GM12878 (cell line): ENCODE measurements at regions of chr5 and their contacts with region 1.

Region 1: GRCh38 chr5:111550279-111551020 is 38.1 kb upstream of the STARD4 start:
- DNase-seq: peak; percentile 50
- ATAC-seq: peak; percentile 99
- H3K4me3 ChIP-seq: no peak overlapping the region
- H3K27ac ChIP-seq: no peak overlapping the region
- H3K4me1 ChIP-seq: no peaks in the 10 kb centered on the region
- H3K27me3 ChIP-seq: no peaks in the 10 kb centered on the region
- CTCF ChIP-seq: peak; percentile 50 to 76 (median 56)
- EP300 ChIP-seq: no peak
- POLR2A ChIP-seq: no peak
- RAD21 ChIP-seq: peak; percentile 91

Region 2: DNA sequence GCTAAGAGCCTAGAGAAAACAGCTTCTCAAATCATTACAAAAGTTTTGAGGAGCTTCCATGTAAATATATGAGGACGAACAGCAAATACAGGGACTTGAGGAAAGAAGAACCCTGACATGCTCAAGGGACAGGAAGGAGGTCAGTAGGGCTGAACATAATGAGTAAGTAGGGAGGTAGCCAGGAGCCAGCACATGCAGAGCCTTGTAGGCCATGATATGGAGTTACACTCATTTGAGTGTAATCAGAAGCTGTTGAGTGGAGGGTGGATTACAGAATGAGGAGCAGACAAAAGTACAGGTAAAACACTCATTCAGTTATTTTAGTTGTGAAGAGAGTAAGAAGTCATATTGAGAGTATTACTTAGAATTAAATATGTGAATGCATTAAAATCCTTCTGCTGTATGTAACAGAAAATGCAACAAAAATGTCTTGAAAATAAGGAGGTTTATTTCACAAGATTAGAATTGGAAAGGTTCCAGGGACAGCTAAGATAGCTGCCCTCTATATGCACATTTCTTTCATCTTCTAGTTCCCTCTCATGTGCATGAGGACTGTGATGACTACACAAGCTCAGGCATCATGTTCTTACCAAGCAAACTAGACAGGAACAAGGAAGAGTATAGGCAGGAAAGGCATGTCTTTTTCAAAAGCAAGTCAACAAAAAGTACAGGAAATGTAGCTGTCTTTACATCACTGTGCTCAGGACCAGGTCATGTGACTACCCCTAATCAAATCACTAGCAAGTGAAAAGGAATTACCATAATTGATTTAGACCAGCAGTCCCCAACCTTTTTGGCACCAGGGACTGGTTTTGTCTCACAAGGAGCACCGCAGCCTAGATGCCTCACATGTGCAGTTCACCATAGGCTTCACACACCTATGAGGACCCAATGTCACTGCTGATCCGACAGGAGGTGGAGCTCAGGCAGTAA is 911.2 kb before region 1 on chr5:
- CTCF ChIA-PET with region 1: no interaction called
- POLR2A ChIA-PET with region 1: no interaction called
- RAD21 ChIA-PET with region 1: no interaction called
- SMC1A ChIA-PET with region 1: no interaction called
- in situ Hi-C with region 1: no loop called
- intact Hi-C with region 1: no loop called
- DNase-seq: no peak
- ATAC-seq: no peak
- H3K4me3 ChIP-seq: no peak overlapping the region
- H3K27ac ChIP-seq: no peak overlapping the region
- H3K4me1 ChIP-seq: no peaks in the 10 kb centered on the region
- H3K27me3 ChIP-seq: no peaks in the 10 kb centered on the region
- CTCF ChIP-seq: no peak
- EP300 ChIP-seq: no peak
- POLR2A ChIP-seq: no peak
- RAD21 ChIP-seq: no peak

Region 3: DNA sequence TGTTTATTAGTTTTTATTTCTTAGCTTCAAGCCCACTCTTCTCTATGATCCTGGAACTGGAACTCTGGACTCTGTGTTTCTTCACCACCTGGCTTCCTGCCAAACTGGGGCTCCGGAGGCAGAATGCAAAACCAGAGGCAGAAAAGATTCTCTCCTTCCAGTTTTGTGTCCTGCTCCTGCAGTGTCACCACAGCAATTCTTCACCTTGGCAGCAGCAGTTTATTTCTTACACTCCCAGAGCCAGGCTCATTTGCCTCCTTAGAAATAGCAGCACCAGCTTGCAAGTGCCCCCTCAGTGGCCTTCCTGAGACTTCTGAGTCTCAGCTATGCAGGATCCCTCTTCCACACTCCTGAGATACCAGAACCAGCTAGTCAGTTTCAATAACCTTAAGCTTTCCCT is 352.9 kb before region 1 on chr5:
- CTCF ChIA-PET with region 1: no interaction called
- POLR2A ChIA-PET with region 1: no interaction called
- RAD21 ChIA-PET with region 1: no interaction called
- SMC1A ChIA-PET with region 1: no interaction called
- in situ Hi-C with region 1: no loop called
- intact Hi-C with region 1: no loop called
- DNase-seq: no peak
- ATAC-seq: no peak
- H3K4me3 ChIP-seq: no peak overlapping the region
- H3K27ac ChIP-seq: no peak overlapping the region
- H3K4me1 ChIP-seq: peaks cover 13% of the 10 kb centered on the region
- H3K27me3 ChIP-seq: no peaks in the 10 kb centered on the region
- CTCF ChIP-seq: no peak
- EP300 ChIP-seq: no peak
- POLR2A ChIP-seq: no peak
- RAD21 ChIP-seq: no peak

Region 4: DNA sequence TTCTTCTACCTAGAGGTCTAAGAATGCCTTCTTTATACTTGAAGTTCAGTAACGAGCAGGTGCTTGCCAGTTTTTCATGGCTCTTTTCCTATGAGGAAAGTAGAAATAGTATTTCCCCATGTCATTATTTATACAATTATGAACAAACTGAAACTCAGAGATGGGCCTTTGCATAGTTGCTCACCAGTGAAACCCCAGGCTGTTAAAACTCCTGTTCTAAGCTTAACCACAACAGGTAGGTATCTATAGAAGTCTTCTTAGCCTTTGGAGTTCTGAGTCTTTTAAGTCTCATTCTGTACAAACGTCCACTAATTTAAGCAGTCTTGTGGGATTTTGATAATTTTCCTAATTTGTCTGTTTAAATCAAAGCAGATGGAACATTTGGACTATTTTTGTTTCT is 128.2 kb before region 1 on chr5:
- CTCF ChIA-PET with region 1: no interaction called
- POLR2A ChIA-PET with region 1: no interaction called
- RAD21 ChIA-PET with region 1: no interaction called
- SMC1A ChIA-PET with region 1: no interaction called
- in situ Hi-C with region 1: no loop called
- intact Hi-C with region 1: no loop called
- DNase-seq: no peak
- ATAC-seq: peak; percentile 82
- H3K4me3 ChIP-seq: no peak overlapping the region
- H3K27ac ChIP-seq: no peak overlapping the region
- H3K4me1 ChIP-seq: peaks cover 5% of the 10 kb centered on the region; the same call in 1 of the 2 replicates
- H3K27me3 ChIP-seq: no peaks in the 10 kb centered on the region
- CTCF ChIP-seq: no peak
- EP300 ChIP-seq: no peak
- POLR2A ChIP-seq: no peak
- RAD21 ChIP-seq: no peak

Region 5: GRCh38 chr5:111454198-111454622 is 96.2 kb before region 1 on chr5:
- CTCF ChIA-PET with region 1: no interaction called
- POLR2A ChIA-PET with region 1: no interaction called
- RAD21 ChIA-PET with region 1: no interaction called
- SMC1A ChIA-PET with region 1: no interaction called
- in situ Hi-C with region 1: no loop called
- intact Hi-C with region 1: no loop called
- DNase-seq: no peak
- ATAC-seq: no peak
- H3K4me3 ChIP-seq: no peak overlapping the region
- H3K27ac ChIP-seq: no peak overlapping the region
- H3K4me1 ChIP-seq: no peaks in the 10 kb centered on the region
- H3K27me3 ChIP-seq: no peaks in the 10 kb centered on the region
- CTCF ChIP-seq: no peak
- EP300 ChIP-seq: no peak
- POLR2A ChIP-seq: no peak
- RAD21 ChIP-seq: no peak

Region 6: DNA sequence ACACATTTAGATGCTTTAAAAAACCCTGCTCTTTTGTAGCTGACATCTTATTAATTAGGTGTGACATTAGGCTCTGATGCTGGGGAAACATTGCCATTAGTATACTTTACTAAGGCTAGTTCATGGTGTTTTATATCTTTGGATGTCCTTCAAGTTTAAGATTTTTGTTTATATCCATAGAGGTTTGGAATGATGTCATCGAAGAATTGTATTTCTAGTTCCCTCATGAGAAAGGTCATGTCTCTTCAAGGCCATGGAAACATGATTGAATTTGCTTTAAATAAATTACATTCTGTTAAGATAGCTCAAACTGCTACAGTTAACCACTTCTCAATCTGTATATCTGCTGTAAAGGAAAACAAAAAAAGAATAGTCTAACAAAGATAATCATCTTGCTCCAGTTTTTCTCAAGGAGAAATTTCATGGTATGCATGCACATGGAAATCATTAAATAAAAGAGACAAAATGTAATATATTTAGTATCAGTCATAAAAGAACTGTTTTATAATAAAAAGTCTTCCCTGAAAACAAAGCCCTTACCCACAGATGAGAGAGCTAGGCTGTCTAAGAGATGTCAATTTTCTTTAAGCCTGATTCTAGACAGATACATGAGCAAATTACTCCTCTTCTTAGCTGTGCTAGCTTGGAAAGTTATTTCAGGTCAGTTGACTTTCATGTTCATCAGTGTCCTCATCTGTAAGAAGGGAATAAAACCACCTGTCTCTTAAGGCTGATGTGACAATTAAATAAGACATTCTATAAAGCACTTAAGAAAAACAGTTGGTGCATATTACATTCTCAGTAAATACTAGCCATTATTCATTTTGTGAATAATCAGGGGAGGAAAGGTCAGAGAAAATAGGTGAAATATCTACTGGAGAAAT is 13.1 kb before region 1 on chr5:
- CTCF ChIA-PET with region 1: interaction called, 28 read pairs
- POLR2A ChIA-PET with region 1: no interaction called
- RAD21 ChIA-PET with region 1: interaction called, 3 read pairs
- SMC1A ChIA-PET with region 1: interaction called, 10 read pairs
- in situ Hi-C with region 1: no loop called
- intact Hi-C with region 1: no loop called
- DNase-seq: no peak
- ATAC-seq: no peak
- H3K4me3 ChIP-seq: no peak overlapping the region
- H3K27ac ChIP-seq: no peak overlapping the region
- H3K4me1 ChIP-seq: no peaks in the 10 kb centered on the region
- H3K27me3 ChIP-seq: no peaks in the 10 kb centered on the region
- CTCF ChIP-seq: no peak
- EP300 ChIP-seq: no peak
- POLR2A ChIP-seq: no peak
- RAD21 ChIP-seq: no peak

Region 7: GRCh38 chr5:111830333-111830732 is 279.9 kb after region 1 on chr5:
- CTCF ChIA-PET with region 1: interaction called, 3 read pairs
- POLR2A ChIA-PET with region 1: no interaction called
- RAD21 ChIA-PET with region 1: interaction called, 3 read pairs
- SMC1A ChIA-PET with region 1: interaction called, 4 read pairs
- in situ Hi-C with region 1: no loop called
- intact Hi-C with region 1: loop called (anchors 10 kb)
- DNase-seq: no peak
- ATAC-seq: no peak
- H3K4me3 ChIP-seq: no peak overlapping the region
- H3K27ac ChIP-seq: no peak overlapping the region
- H3K4me1 ChIP-seq: no peaks in the 10 kb centered on the region
- H3K27me3 ChIP-seq: no peaks in the 10 kb centered on the region
- CTCF ChIP-seq: no peak
- EP300 ChIP-seq: no peak
- POLR2A ChIP-seq: no peak
- RAD21 ChIP-seq: no peak